Motor neuron (in vitro differentiated cells): ENCODE measurements at regions of chr6 and their contacts with region 1.

Region 1: GRCh38 chr6:113909234-113909856 is 52.2 kb downstream of the MARCKS start:
- ATAC-seq: peak in 5 of 8 experiments; percentile 29 to 62 (median 44)
- H3K4me3 ChIP-seq: no peak overlapping the region
- H3K27ac ChIP-seq: no peak overlapping the region
- H3K4me1 ChIP-seq: no peaks in the 10 kb centered on the region

Region 2: DNA sequence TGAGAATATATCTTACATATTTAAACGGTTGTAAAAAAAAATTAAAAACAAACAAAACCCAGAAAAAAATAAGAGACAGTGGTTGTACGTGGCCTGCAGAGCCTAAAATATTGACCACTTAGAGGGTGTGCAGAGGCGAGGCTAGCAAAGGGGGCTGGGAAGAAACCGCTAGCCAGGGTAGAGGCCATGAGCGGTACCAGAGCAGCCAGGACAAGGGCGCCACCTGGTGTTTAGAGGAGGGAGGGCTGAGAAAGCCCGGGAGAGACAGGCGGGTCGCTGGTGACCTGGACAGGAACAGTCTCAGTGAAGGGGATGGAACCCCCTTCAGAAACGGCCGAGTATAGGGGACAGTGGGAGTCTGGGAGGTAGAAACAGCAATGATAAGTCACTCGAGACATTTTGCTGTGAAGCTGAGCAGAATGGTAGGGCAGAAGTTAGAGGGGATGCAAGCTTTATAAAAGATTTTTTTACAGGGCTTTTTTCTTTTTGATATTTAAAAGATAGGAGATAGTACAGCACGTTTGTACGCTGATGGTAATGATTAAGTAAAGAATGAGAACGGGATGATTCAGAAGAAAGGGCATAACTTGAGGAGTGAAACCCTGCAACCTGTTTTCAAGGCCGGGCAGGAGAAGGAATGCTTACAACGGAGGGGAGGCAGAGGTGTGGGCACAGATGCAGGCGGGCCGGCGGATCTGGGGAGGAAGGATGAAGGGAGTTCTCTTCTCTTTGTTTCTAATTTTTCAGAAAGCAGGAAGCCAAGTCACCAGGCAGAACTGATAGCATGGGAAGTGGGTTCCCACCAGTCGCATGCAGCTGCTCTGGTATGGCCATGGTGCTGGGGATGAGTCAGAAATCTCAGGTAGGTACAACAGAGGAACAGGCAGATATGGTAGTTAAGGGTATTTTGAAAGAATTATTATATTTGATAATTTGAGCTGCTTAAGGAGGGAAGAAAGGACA is 1745.8 kb before region 1 on chr6:
- in situ Hi-C with region 1: loop called in 1 of 9 experiments (anchors 25 kb)
- ATAC-seq: peak; percentile 35 to 99 (median 74)
- H3K4me3 ChIP-seq: no peak overlapping the region
- H3K27ac ChIP-seq: no peak overlapping the region
- H3K4me1 ChIP-seq: no peaks in the 10 kb centered on the region

Region 3: GRCh38 chr6:113330333-113330942 is 578.9 kb before region 1 on chr6:
- in situ Hi-C with region 1: no loop called
- ATAC-seq: peak in 5 of 8 experiments; percentile 21 to 82 (median 70)
- H3K4me3 ChIP-seq: no peak overlapping the region
- H3K27ac ChIP-seq: no peak overlapping the region
- H3K4me1 ChIP-seq: peaks cover 11 to 17% of the 10 kb centered on the region in 2 donors

Region 4: DNA sequence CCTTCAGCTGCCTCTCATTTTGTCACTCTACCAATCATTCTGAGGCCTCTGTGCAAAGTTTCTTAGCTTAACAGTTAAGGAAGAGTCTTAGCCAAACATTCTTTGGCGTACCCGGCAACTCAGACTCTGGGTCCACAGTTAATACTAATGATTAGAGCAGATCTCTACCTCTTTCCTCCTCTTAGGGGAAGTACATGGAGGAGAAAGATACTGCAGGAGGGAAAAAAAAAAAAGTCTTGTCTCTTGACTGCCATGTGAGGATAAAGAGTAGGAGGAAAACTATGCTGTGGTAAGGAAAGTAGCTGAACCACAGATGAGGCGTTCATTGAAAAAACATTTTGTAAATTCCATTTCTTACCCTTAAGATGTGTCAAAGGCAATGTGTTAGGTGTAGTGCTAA is 96.2 kb before region 1 on chr6:
- in situ Hi-C with region 1: no loop called
- ATAC-seq: peak in 1 of 8 experiments; percentile 50
- H3K4me3 ChIP-seq: no peak overlapping the region
- H3K27ac ChIP-seq: no peak overlapping the region
- H3K4me1 ChIP-seq: no peaks in the 10 kb centered on the region

Region 5: DNA sequence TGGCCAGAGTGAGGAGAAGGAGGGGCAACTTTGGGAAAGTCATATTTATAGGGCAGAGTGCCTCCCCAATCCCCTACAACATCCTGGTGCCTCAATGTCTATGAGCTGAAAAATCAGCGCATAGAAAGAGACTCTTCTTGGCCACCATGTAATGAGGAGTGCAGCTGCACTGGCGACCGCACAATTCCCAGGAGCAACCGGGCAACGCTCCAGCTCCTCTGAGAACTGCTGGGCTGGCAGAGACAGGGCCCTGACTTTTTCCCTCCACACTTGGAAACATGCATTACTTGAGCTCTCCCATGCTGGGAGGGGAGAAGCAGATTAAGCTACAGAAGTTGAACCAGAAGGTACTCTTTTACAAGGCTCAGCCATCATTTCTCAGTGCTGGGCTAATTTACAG is 83.6 kb before region 1 on chr6:
- in situ Hi-C with region 1: no loop called
- ATAC-seq: peak in 4 of 8 experiments; percentile 28 to 69 (median 50)
- H3K4me3 ChIP-seq: no peak overlapping the region
- H3K27ac ChIP-seq: no peak overlapping the region
- H3K4me1 ChIP-seq: no peaks in the 10 kb centered on the region